HCT116 (cell line): ENCODE measurements at regions of chr17 and their contacts with region 1.

Region 1: GRCh38 chr17:48215583-48216139 is 108.1 kb downstream of the SNX11 start:
- DNase-seq: peak; percentile 71
- ATAC-seq: peak; percentile 99
- H3K4me3 ChIP-seq: no peak overlapping the region
- H3K27ac ChIP-seq: no peak overlapping the region
- H3K4me1 ChIP-seq: peaks cover 0 to 16% of the 10 kb centered on the region in 2 experiments; a peak in 1 of 4 replicates
- H3K27me3 ChIP-seq: no peaks in the 10 kb centered on the region
- CTCF ChIP-seq: peak; percentile 80 to 94 (median 91)
- POLR2A ChIP-seq: no peak
- RAD21 ChIP-seq: peak; percentile 98

Region 2: DNA sequence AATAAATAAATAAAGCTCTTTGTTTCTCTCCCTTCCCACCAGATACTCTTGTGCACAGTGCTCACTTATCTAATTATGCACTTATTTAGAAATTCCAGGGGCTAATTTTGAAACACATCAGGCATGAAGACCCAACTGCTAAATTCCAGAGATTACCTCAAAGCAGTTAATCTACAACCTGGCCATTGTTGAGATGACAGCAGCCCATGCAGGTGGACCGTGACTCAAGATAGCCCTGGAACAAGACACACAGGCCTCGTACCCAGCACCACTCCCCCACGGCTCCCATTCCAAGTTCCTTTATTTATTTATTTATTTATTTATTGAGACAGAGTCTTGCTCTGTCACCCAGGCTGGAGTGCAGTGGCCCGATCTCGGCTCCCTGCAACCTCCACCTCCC is 744.8 kb before region 1 on chr17:
- CTCF ChIA-PET with region 1: no interaction called
- POLR2A ChIA-PET with region 1: no interaction called
- RAD21 ChIA-PET with region 1: no interaction called
- intact Hi-C with region 1: no loop called
- DNase-seq: no peak
- ATAC-seq: no peak
- H3K4me3 ChIP-seq: no peak overlapping the region
- H3K27ac ChIP-seq: no peak overlapping the region
- H3K4me1 ChIP-seq: no peaks in the 10 kb centered on the region
- H3K27me3 ChIP-seq: no peaks in the 10 kb centered on the region
- CTCF ChIP-seq: no peak
- POLR2A ChIP-seq: no peak
- RAD21 ChIP-seq: no peak

Region 3: GRCh38 chr17:48068491-48068961 is 147.1 kb before region 1 on chr17:
- CTCF ChIA-PET with region 1: no interaction called
- POLR2A ChIA-PET with region 1: no interaction called
- RAD21 ChIA-PET with region 1: no interaction called
- intact Hi-C with region 1: no loop called
- DNase-seq: no peak
- ATAC-seq: peak; percentile 88
- H3K4me3 ChIP-seq: no peak overlapping the region
- H3K27ac ChIP-seq: no peak overlapping the region
- H3K4me1 ChIP-seq: no peaks in the 10 kb centered on the region
- H3K27me3 ChIP-seq: no peaks in the 10 kb centered on the region
- CTCF ChIP-seq: peak in 2 of 3 experiments; percentile 64 to 66; a peak in 4 of 6 replicates
- POLR2A ChIP-seq: no peak
- RAD21 ChIP-seq: peak; percentile 27; the same call in 1 of the 2 replicates

Region 4: GRCh38 chr17:48228721-48229120 is 13.1 kb after region 1 on chr17:
- CTCF ChIA-PET with region 1: interaction called, 12 read pairs
- POLR2A ChIA-PET with region 1: no interaction called
- RAD21 ChIA-PET with region 1: no interaction called
- intact Hi-C with region 1: no loop called
- DNase-seq: no peak
- ATAC-seq: peak; percentile 92
- H3K4me3 ChIP-seq: no peak overlapping the region
- H3K27ac ChIP-seq: no peak overlapping the region
- H3K4me1 ChIP-seq: peaks cover 0 to 26% of the 10 kb centered on the region in 2 experiments; a peak in 1 of 4 replicates
- H3K27me3 ChIP-seq: no peaks in the 10 kb centered on the region
- CTCF ChIP-seq: peak in 2 of 3 experiments; percentile 63 to 73; a peak in 4 of 6 replicates
- POLR2A ChIP-seq: no peak
- RAD21 ChIP-seq: 0 out of 2 replicates have a peak, but pooled peaks have one; percentile 7

Region 5: GRCh38 chr17:48335858-48336500 is 120.3 kb after region 1 on chr17:
- CTCF ChIA-PET with region 1: interaction called, 28 read pairs
- POLR2A ChIA-PET with region 1: no interaction called
- RAD21 ChIA-PET with region 1: interaction called, 5 to 8 read pairs
- intact Hi-C with region 1: loop called (anchors 1 kb)
- DNase-seq: peak; percentile 78
- ATAC-seq: peak; percentile 85
- H3K4me3 ChIP-seq: no peak overlapping the region
- H3K27ac ChIP-seq: no peak overlapping the region
- H3K4me1 ChIP-seq: peaks cover 0 to 9% of the 10 kb centered on the region in 2 experiments; a peak in 2 of 4 replicates
- H3K27me3 ChIP-seq: no peaks in the 10 kb centered on the region
- CTCF ChIP-seq: peak; percentile 64 to 93 (median 92)
- POLR2A ChIP-seq: no peak
- RAD21 ChIP-seq: peak; percentile 85

Region 6: DNA sequence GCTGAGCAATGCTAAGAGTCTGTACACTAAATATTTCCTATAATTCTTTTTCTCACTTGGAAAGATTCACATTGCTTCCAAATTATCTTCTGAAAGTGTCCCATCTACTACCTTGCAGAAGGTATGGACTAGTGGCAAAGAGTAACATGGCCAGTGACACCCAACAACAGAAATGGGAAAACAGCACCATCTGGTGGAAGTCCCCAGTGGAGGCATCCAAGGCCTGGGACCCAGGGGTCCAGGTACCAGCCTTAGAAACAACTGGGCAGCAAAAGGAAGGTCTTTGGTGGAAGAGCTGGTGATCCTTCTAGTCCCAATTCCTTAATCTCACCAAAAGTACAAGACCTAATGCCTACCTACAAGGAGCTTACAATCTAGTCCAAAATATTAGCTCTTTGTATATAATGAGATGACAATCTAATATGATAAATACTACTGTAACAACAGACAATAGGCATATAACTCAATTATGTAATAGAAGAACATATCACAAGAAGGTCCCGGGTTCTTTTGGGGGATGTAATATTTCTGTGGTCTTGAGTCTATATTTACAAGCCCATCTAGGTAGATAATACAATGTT is 159.1 kb after region 1 on chr17:
- CTCF ChIA-PET with region 1: interaction called, 28 read pairs
- POLR2A ChIA-PET with region 1: no interaction called
- RAD21 ChIA-PET with region 1: no interaction called
- intact Hi-C with region 1: loop called (anchors 1 kb)
- DNase-seq: peak; percentile 63
- ATAC-seq: peak; percentile 99
- H3K4me3 ChIP-seq: no peak overlapping the region
- H3K27ac ChIP-seq: no peak overlapping the region
- H3K4me1 ChIP-seq: no peaks in the 10 kb centered on the region
- H3K27me3 ChIP-seq: no peaks in the 10 kb centered on the region
- CTCF ChIP-seq: peak; percentile 92 to 97 (median 94)
- POLR2A ChIP-seq: no peak
- RAD21 ChIP-seq: peak; percentile 91

Region 7: GRCh38 chr17:48510761-48511604 is 295.3 kb after region 1 on chr17:
- CTCF ChIA-PET with region 1: no interaction called
- POLR2A ChIA-PET with region 1: no interaction called
- RAD21 ChIA-PET with region 1: no interaction called
- intact Hi-C with region 1: no loop called
- DNase-seq: no peak
- ATAC-seq: no peak
- H3K4me3 ChIP-seq: no peak overlapping the region
- H3K27ac ChIP-seq: no peak overlapping the region
- H3K4me1 ChIP-seq: peaks cover 3 to 8% of the 10 kb centered on the region in 2 experiments; a peak in 3 of 4 replicates
- H3K27me3 ChIP-seq: peaks cover 14% of the 10 kb centered on the region; the same call in 1 of the 2 replicates
- CTCF ChIP-seq: no peak
- POLR2A ChIP-seq: no peak
- RAD21 ChIP-seq: no peak

Region 8: DNA sequence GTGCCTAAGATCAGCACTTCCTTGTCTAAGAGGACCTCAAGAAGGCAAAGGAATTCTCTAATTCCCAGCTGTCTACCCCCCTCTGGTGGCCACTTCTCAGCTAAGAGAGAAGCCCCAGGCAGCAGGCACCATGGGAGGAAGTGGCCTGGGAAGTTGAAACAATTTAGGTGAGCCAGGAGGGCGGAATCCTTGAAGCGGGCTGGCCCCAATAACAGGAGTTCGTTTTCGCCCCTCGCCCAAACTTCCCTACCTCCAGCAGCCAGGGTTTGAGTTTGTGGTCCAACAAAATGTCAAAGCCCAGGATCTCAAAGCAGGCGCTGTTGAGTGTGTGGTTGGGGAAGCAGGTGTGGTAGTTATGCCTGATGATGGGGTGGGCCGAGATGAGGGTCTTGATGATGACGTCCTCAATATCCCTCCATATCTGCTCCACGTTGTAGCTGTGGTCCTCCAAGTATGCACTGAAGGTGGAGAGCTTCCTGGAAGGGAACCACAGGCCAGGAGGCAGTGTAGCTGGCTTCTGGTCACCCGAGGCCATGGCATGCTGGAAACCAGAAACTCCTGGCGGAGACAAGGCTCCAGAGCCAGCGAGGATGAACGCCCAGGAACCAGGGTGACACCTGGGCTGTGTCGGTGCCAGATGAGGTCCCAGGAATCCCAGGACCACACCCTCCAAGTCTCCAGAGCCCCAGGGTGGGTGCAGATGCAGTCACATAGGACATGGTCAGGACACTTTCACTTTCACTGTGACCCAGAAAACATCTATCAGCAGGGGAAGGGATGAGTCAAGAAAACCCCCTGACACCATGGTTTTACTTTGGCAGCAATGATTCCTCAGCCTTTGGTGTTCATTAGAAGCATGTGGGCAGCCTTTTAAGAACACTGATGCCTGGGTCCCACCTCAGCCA is 575.7 kb after region 1 on chr17:
- CTCF ChIA-PET with region 1: no interaction called
- POLR2A ChIA-PET with region 1: no interaction called
- RAD21 ChIA-PET with region 1: no interaction called
- intact Hi-C with region 1: loop called (anchors 5 kb)
- DNase-seq: peak; percentile 87
- ATAC-seq: peak; percentile 92
- H3K4me3 ChIP-seq: no peak overlapping the region
- H3K27ac ChIP-seq: no peak overlapping the region
- H3K4me1 ChIP-seq: peaks cover 12 to 32% of the 10 kb centered on the region in 2 experiments
- H3K27me3 ChIP-seq: no peaks in the 10 kb centered on the region
- CTCF ChIP-seq: peak; percentile 94 to 98 (median 98)
- POLR2A ChIP-seq: no peak
- RAD21 ChIP-seq: peak; percentile 97